T-cell (primary cell): ENCODE measurements at regions of chr13 and their contacts with region 1.

Region 1: GRCh38 chr13:26498656-26499591 is 58.6 kb upstream of the WASF3 start:
- DNase-seq: no peak
- ATAC-seq: no peak
- H3K4me3 ChIP-seq: no peak overlapping the region
- H3K4me3 Mint-ChIP-seq: no peak overlapping the region
- H3K27ac ChIP-seq: no peak overlapping the region
- H3K27ac Mint-ChIP-seq: no peak overlapping the region
- H3K4me1 ChIP-seq: no peaks in the 10 kb centered on the region
- H3K4me1 Mint-ChIP-seq: peaks cover 4 to 12% (median 9%) of the 10 kb centered on the region in 3 donors
- H3K27me3 ChIP-seq: peaks cover 2 to 27% of the 10 kb centered on the region in 2 experiments
- H3K27me3 Mint-ChIP-seq: peaks cover 0 to 9% of the 10 kb centered on the region in 2 donors

Region 2: DNA sequence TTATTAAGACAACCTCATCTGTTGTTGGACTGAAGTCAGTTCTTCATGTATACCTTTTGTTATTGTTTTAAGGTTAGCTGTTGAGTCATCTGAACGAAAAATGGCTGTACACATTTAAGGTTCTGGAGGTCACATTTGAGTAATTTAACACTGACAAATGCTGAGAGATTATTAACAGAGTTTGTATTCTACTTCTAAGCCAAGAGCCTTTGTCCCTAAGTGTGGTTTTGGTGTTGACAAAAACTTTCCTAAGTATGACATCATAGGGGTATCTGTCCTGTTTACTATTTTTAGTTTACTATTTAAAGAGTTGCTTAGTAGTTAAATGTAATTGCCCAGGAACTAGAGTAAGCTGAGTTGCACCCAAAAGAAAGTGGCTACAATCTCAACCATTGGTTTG is 173.0 kb before region 1 on chr13:
- CTCF ChIA-PET with region 1: no interaction called
- POLR2A ChIA-PET with region 1: no interaction called
- DNase-seq: no peak
- ATAC-seq: no peak
- H3K4me3 ChIP-seq: no peak overlapping the region
- H3K4me3 Mint-ChIP-seq: no peak overlapping the region
- H3K27ac ChIP-seq: no peak overlapping the region
- H3K27ac Mint-ChIP-seq: no peak overlapping the region
- H3K4me1 ChIP-seq: no peaks in the 10 kb centered on the region
- H3K4me1 Mint-ChIP-seq: peaks cover 70 to 76% (median 71%) of the 10 kb centered on the region in 3 donors
- H3K27me3 ChIP-seq: no peaks in the 10 kb centered on the region
- H3K27me3 Mint-ChIP-seq: no peaks in the 10 kb centered on the region

Region 3: DNA sequence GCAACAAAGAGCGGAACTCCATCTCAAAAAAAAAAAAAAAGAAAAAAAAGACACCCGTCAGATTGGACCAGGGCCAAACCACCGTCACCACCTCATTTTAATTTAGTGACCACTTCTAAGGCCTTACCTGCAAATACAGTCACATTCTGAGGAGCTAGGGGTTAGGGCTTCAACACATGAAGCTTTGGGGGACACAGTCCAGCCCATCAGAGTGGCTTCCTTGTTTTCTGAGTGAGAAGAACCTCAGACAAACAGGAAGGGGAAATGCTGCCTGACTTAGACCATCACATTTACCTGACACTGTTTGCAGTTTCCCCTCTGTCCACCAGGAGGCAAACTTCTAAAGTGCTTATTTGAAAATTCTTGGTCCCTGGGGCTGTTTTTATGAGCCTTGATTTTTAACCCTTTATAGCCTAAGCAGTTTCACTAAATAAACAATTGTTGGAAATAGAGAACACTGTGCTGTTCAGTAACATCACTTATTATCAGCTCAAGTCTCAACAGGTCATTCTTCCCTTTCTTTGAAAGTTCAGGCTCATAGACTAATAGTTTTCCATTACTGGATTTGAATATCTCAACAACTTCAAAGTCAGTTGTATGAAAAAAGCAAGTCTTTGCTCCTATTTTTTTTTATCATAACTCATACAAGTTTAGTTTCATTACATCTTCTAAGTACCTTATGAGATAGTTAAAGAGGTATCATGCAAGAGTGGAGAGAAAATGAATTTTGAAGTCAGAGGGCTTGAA is 16.3 kb before region 1 on chr13:
- CTCF ChIA-PET with region 1: interaction called, 10 read pairs
- POLR2A ChIA-PET with region 1: no interaction called
- DNase-seq: peak; percentile 29 to 84 (median 62)
- ATAC-seq: peak; percentile 90 to 97 (median 92)
- H3K4me3 ChIP-seq: no peak overlapping the region
- H3K4me3 Mint-ChIP-seq: peak overlapping the region; percentile 21 to 48 (median 21)
- H3K27ac ChIP-seq: peak overlapping the region; percentile 40
- H3K27ac Mint-ChIP-seq: peak overlapping the region; percentile 63 to 87
- H3K4me1 ChIP-seq: peaks cover 6 to 20% of the 10 kb centered on the region in 2 experiments
- H3K4me1 Mint-ChIP-seq: peaks cover 6 to 20% (median 19%) of the 10 kb centered on the region in 3 donors
- H3K27me3 ChIP-seq: no peaks in the 10 kb centered on the region
- H3K27me3 Mint-ChIP-seq: no peaks in the 10 kb centered on the region